ENCODE measurements at regions of chr10 and their contacts with region 1.

Region 1: GRCh38 chr10:30722956-30723620 is 93.5 kb upstream of the LYZL2 start:
- DNase-seq: no peak
- ATAC-seq: peak; percentile 29
- H3K4me3 Mint-ChIP-seq: no peak overlapping the region
- H3K27ac Mint-ChIP-seq: no peak overlapping the region
- H3K4me1 Mint-ChIP-seq: peaks cover 15% of the 10 kb centered on the region
- H3K27me3 Mint-ChIP-seq: peaks cover 21% of the 10 kb centered on the region
- CTCF ChIP-seq: no peak

Region 2: DNA sequence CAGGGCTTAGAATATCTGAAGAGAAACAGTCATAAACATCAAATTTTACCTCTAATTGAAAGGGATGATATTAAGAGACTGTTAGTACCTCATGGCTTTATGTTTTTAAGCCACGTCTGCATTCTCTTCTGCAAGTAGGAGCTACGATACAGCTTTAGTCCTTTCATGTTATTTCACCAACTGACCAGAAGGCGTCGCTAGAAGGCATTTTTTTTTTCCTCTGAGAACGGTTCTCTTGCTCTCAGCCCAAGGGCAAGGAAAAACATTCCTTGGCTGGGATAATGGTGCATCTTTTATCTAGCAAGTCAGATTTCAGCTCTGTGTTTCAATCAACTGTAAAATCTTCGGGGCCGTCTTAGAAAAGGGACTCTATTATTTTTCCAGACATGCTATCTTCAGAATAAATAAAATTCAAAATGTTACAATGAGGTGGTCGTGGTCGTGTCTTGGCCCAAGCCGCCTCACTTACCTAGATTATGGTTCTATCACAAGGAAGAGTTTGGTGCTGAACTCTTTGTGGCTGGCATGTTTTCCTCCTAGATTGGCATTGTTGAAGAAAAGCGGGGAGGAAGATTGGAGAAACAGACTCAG is 52.0 kb before region 1 on chr10:
- CTCF ChIA-PET with region 1: interaction called, 4 read pairs
- POLR2A ChIA-PET with region 1: interaction called, 6 read pairs
- intact Hi-C with region 1: loop called (anchors 5 kb)
- DNase-seq: no peak
- ATAC-seq: peak; percentile 64
- H3K4me3 Mint-ChIP-seq: peak overlapping the region; percentile 61
- H3K27ac Mint-ChIP-seq: no peak overlapping the region
- H3K4me1 Mint-ChIP-seq: peaks cover 6% of the 10 kb centered on the region
- H3K27me3 Mint-ChIP-seq: peaks cover 16% of the 10 kb centered on the region
- CTCF ChIP-seq: peak; percentile 79

Region 3: DNA sequence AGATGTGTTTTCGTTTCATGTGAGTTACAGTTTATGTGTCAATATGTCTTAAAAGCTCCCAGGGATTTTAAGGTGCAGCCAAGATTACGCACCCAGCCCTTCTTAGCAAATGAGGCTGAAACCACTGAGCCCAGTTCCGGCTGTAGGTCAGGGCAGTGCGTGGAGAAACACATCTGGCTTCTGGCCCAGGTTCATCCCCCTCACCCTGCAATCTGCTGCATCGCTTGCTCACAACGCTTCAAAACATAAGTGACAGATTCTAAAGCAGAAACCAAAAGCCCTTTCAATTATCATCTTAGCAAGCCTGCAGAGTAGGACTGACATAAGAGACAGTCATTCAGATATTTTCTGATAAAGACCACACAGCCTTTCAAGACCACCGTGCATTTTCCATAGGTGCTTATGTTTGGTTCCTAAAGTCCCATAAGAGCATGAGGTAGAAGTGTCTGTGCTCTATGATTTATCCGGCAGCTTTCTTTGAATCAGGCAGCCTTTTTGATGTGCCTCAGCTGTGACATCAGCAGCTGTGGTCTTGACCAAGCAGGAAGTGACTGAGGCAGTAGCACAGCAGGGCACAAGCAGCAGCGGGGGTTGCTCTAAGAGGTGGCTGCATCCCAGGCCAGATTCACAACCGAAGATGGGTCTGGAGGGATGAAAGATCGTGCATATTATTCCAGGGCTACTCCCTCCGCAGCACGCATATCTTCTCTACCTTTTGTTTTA is 21.5 kb before region 1 on chr10:
- CTCF ChIA-PET with region 1: interaction called, 3 read pairs
- POLR2A ChIA-PET with region 1: interaction called, 7 read pairs
- intact Hi-C with region 1: loop called (anchors 2 kb)
- DNase-seq: no peak
- ATAC-seq: peak; percentile 61
- H3K4me3 Mint-ChIP-seq: peak overlapping the region; percentile 74
- H3K27ac Mint-ChIP-seq: peak overlapping the region; percentile 86
- H3K4me1 Mint-ChIP-seq: peaks cover 64% of the 10 kb centered on the region
- H3K27me3 Mint-ChIP-seq: no peaks in the 10 kb centered on the region
- CTCF ChIP-seq: no peak

Region 4: DNA sequence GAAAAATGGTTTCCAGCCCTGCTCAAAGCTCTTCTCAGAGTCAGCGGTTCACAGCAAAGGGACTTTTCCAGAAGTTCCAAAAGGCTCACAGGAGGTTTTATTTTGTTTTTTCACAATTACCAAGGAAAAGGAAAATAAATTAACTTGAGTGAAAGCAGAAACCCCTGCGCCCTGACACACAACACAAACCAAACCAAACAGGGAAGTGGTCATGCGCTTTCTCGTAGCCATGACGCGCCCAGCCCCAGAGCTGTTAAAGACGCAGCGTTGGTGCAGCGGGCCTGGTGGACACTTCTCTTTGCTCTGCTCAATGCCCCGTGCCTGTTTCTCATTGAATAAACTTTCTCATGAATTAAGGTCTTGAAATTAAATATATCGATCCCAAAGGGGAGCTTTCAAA is 40.8 kb after region 1 on chr10:
- CTCF ChIA-PET with region 1: no interaction called
- POLR2A ChIA-PET with region 1: no interaction called
- intact Hi-C with region 1: no loop called
- DNase-seq: no peak
- ATAC-seq: no peak
- H3K4me3 Mint-ChIP-seq: no peak overlapping the region
- H3K27ac Mint-ChIP-seq: no peak overlapping the region
- H3K4me1 Mint-ChIP-seq: no peaks in the 10 kb centered on the region
- H3K27me3 Mint-ChIP-seq: peaks cover 2% of the 10 kb centered on the region
- CTCF ChIP-seq: no peak

Region 5: GRCh38 chr10:30999070-30999712 is 276.1 kb after region 1 on chr10:
- CTCF ChIA-PET with region 1: no interaction called
- POLR2A ChIA-PET with region 1: no interaction called
- intact Hi-C with region 1: no loop called
- DNase-seq: no peak
- ATAC-seq: no peak
- H3K4me3 Mint-ChIP-seq: no peak overlapping the region
- H3K27ac Mint-ChIP-seq: no peak overlapping the region
- H3K4me1 Mint-ChIP-seq: peaks cover 7% of the 10 kb centered on the region
- H3K27me3 Mint-ChIP-seq: no peaks in the 10 kb centered on the region
- CTCF ChIP-seq: no peak

Region 6: GRCh38 chr10:31490858-31491504 is 767.9 kb after region 1 on chr10:
- CTCF ChIA-PET with region 1: no interaction called
- POLR2A ChIA-PET with region 1: no interaction called
- intact Hi-C with region 1: loop called (anchors 2 kb)
- DNase-seq: no peak
- ATAC-seq: peak; percentile 45
- H3K4me3 Mint-ChIP-seq: no peak overlapping the region
- H3K27ac Mint-ChIP-seq: no peak overlapping the region
- H3K4me1 Mint-ChIP-seq: no peaks in the 10 kb centered on the region
- H3K27me3 Mint-ChIP-seq: no peaks in the 10 kb centered on the region
- CTCF ChIP-seq: no peak

Region 7: GRCh38 chr10:31770307-31770902 is 1047.3 kb after region 1 on chr10:
- CTCF ChIA-PET with region 1: interaction called, 5 read pairs
- POLR2A ChIA-PET with region 1: no interaction called
- intact Hi-C with region 1: loop called (anchors 1 kb)
- DNase-seq: no peak
- ATAC-seq: peak; percentile 96
- H3K4me3 Mint-ChIP-seq: no peak overlapping the region
- H3K27ac Mint-ChIP-seq: no peak overlapping the region
- H3K4me1 Mint-ChIP-seq: no peaks in the 10 kb centered on the region
- H3K27me3 Mint-ChIP-seq: no peaks in the 10 kb centered on the region
- CTCF ChIP-seq: peak; percentile 53

Region 8: DNA sequence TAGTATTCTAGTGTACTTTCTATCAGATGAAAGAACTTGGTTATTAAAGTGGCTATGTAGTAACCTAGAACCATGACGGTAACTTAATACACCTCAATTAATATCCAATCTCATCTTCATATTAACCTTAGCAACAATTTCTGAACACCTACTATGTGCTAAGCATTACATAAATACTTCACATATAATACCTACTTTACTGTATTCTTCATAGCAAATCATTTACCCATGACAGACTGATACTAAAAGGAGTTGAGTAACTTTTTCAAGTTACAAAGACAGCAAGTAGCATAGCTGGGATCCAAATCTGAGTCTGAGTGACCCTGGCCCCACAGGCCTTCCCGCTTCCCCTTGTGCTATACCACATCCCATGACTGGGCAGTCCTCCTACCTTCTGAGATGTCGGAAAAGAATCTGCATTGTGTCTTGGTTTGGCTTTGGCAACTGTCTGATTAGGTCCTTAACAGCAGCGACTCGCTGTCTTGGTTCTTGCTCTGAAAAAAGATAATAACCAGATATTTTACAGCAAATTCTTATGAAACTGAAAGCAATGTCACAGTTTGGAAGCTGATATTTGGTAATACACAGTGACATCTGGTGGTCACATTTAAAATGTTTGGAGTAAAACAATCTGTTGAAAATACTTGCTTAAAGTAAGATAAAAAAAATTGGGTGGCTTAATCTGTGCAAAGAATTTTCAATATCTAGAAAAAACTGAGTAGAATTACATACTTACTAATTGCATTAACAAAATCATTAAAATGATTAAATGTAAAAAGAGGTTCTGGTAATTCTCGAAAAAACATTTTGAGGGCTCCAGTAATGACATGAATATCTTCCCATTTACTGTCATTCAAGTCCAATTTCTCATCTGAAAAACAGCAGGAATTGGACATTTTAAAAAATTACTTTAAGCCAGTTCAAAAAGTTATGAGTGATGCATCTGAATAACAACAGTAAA is 1085.5 kb after region 1 on chr10:
- CTCF ChIA-PET with region 1: interaction called, 4 read pairs
- POLR2A ChIA-PET with region 1: no interaction called
- intact Hi-C with region 1: loop called (anchors 1 kb)
- DNase-seq: no peak
- ATAC-seq: no peak
- H3K4me3 Mint-ChIP-seq: no peak overlapping the region
- H3K27ac Mint-ChIP-seq: peak overlapping the region; percentile 6
- H3K4me1 Mint-ChIP-seq: peaks cover 7% of the 10 kb centered on the region
- H3K27me3 Mint-ChIP-seq: no peaks in the 10 kb centered on the region
- CTCF ChIP-seq: no peak